ENCODE measurements at regions of chr2 and their contacts with region 1.

Region 1: DNA sequence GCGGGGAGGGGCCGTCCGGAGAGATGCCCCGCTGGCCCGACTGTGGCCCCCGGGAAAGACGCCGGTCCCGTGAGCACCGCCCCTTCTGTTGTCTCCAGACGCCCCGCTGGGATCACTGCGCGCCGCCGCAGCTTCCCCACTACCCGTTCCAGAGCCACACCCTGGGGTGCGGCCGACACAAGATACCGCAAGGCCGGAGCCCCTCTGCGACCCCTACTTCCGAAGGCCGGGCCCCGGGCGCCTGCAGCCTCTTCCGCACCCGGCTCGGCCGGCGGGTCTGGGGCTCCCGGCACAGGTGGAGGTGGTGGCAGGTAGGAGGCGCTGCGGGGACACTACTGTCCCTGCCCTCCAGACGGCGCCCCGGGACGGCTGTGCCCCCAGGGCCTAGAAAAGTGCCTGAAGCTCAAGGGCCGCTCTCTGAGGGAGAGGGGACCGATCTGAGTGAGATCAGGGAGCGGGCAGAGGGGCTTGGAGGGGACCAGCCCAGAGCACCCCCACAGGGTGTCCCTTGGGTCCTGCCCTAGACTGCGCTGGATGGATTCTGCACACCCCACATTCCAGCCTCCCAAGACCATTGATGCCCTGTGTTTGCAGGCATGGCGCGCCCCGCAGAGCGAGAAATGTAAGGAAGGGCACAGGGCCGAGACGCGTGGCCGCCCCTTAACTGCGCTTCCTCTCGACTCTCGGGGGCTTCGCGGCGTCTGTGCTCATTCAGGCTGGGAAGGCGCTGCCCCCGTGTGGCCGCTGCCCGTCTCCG is 80.0 kb downstream of the GFPT1 start:
- ATAC-seq: peak; percentile 74 to 93 (median 85)
- H3K4me3 ChIP-seq: peak overlapping the region; percentile 25 to 39 (median 27)
- H3K27ac ChIP-seq: no peak overlapping the region
- H3K4me1 ChIP-seq: peaks cover 0 to 7% of the 10 kb centered on the region in 2 donors

Region 2: DNA sequence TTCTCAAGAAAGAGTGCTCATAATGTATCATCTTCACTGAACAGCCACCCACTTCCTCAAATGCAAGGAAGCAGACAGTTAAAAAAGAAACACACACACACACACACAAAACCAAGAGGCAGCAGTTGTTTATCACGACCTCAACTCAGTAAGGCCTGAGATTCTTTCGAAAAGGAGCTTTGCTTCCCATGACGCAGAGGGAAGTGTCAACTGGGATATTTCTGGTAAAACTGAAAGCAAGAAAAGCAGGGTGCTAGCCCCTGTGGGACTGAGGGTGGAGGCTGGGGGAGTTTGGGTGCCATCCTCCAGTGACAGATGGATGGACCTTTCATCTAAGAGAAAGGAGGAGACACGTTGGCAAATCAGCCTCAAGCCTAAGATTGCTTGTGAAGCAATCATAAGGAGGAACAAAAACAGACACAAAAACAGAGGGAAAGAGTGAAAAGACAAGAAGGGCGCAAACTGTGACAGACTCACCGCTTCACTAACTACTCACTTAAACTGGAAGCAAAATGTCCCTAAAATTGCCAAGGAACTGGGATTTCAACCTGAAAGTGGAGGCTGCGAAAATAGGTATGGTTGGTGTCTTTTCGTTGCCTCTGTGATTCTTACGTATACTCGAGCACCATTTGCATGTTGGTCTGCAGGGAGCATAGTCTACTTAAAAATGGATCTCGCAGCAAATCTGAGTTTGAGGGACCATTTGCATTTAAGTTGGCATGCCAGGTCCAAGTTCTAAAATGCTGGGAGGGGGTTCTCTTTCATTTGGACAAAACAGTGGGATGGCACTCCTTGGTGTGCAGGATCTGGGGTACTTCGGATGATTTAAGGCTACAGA is 572.1 kb before region 1 on chr2 and contains the start of gene ARHGAP25:
- in situ Hi-C with region 1: no loop called
- ATAC-seq: no peak
- H3K4me3 ChIP-seq: no peak within 1 kb of the TSS
- H3K27ac ChIP-seq: no peak within 1 kb of the TSS
- H3K4me1 ChIP-seq: no peaks in the 10 kb centered on the region
- total RNA-seq, gene ARHGAP25: 0.22 to 4.7 (median 2.2) TPM in 7 of 8 experiments, not detected in the other

Region 3: GRCh38 chr2:68943581-68944568 is 363.1 kb before region 1 on chr2:
- in situ Hi-C with region 1: loop called in 2 of 9 experiments (anchors 10 to 25 kb)
- ATAC-seq: peak; percentile 68 to 96 (median 78)
- H3K4me3 ChIP-seq: no peak overlapping the region
- H3K27ac ChIP-seq: no peak overlapping the region
- H3K4me1 ChIP-seq: no peaks in the 10 kb centered on the region

Region 4: DNA sequence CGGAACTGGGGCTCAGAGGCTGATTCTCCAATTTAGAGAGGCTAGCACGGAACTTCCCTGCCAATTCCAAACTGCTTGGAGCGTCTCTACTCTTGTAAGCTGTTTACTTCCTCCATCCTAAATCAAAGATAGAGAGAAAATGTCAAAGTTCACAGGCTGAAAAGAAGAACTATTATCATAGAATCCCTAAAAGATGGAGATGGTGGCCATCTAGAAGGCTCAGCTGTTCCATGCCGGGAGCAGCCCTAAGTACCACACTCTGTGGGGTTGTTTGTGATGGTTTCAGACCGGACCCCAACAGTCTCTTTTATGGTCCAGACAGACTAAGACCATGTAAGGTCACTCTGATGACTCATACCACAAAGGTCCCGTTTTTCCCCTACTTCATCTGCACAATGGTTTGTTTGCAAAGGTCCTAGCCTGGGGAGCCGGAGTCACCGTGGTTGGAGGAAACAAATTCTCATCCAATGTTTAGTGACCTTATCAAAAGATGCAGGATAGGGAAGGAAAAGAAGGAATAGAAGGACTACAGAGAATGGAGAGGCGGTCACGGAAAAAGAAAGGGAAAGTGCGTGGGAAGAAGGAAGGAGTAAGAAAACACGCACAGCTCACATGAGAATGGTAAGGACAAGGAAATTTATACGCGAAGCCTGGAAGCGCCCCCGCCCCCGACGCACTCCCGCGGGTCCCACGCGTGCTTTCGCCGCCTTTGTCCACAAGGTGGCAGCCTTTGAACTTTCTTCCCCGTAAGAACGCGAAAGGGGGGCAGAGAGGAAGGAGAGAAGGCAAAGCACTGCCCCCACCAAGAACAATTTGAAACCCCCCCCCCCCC is 294.5 kb before region 1 on chr2:
- in situ Hi-C with region 1: loop called in 6 of 9 experiments (anchors 25 kb)
- ATAC-seq: peak; percentile 38 to 68 (median 55)
- H3K4me3 ChIP-seq: peak overlapping the region; percentile 61 to 86 (median 75)
- H3K27ac ChIP-seq: no peak overlapping the region
- H3K4me1 ChIP-seq: peaks cover 6% of the 10 kb centered on the region in 2 donors

Region 5: GRCh38 chr2:69026026-69026425 is 281.0 kb before region 1 on chr2:
- in situ Hi-C with region 1: loop called in 7 of 9 experiments (anchors 25 kb)
- ATAC-seq: peak in 2 of 8 experiments; percentile 19 to 30
- H3K4me3 ChIP-seq: no peak overlapping the region
- H3K27ac ChIP-seq: no peak overlapping the region
- H3K4me1 ChIP-seq: peaks cover 7 to 10% of the 10 kb centered on the region in 2 donors

Measured in motor neuron (in vitro differentiated cells).